Right lobe of liver (tissue), 6 donors: ENCODE measurements at regions of chr11 and their contacts with region 1.

Region 1: GRCh38 chr11:27183672-27184457 is 143.2 kb downstream of the BBOX1 start:
- DNase-seq: peak in 2 of 3 donors; percentile 35 to 66
- ATAC-seq: peak; percentile 87 to 88 (median 88)
- H3K4me3 ChIP-seq: peak overlapping the region in 2 of 3 donors; percentile 27
- H3K27ac ChIP-seq: peak overlapping the region in 2 of 3 donors; percentile 38 to 41
- H3K4me1 ChIP-seq: peaks cover 0 to 32% (median 0%) of the 10 kb centered on the region in 4 donors
- H3K27me3 ChIP-seq: no peaks in the 10 kb centered on the region
- CTCF ChIP-seq: peak; percentile 72 to 85 (median 79)
- POLR2A ChIP-seq: no peak

Region 2: DNA sequence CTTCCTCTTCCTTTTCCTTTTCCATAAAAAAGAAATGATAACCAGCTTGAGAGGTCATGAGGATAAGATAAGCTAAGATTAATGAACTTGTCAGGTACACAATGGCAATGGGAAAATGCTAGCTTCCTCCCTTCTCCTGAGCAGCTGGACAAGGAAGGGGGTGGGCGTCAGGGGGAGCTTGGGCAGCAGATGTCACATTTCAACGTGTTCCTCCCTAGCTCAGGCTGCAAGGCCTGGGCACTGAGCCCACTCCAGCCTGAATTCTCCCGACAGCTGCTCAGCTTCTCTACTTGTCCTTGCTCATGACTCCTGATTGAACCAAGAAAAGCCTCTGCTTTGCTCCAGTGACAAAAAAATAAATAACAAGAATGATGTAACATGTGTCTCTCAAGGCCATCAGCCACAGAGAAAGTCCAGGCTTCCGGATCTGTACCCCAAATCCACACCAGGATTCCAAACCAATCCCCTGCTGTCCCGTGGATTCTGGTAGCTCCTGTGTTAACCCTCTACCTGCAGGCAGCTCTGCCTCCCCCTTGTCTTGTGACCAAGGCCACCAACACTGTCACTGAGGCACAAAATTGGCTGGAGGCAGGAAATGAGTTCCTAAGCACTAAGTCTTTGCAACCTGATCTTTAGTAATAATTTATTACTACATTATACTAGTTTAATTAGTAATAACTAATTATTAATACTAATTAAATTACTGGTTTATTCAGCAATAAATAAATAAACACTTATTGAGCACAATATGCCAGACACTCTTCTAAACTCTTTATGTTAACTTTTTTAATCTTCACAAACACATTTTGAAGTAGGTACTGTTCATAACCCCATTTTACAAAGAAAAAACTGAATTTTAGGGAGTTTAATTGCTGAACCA is 32.6 kb after region 1 on chr11:
- intact Hi-C with region 1: no loop called
- DNase-seq: peak in 1 of 3 donors; percentile 42
- ATAC-seq: peak; percentile 44 to 63 (median 54)
- H3K4me3 ChIP-seq: no peak overlapping the region
- H3K27ac ChIP-seq: no peak overlapping the region
- H3K4me1 ChIP-seq: no peaks in the 10 kb centered on the region
- H3K27me3 ChIP-seq: no peaks in the 10 kb centered on the region
- CTCF ChIP-seq: no peak
- POLR2A ChIP-seq: no peak

Region 3: DNA sequence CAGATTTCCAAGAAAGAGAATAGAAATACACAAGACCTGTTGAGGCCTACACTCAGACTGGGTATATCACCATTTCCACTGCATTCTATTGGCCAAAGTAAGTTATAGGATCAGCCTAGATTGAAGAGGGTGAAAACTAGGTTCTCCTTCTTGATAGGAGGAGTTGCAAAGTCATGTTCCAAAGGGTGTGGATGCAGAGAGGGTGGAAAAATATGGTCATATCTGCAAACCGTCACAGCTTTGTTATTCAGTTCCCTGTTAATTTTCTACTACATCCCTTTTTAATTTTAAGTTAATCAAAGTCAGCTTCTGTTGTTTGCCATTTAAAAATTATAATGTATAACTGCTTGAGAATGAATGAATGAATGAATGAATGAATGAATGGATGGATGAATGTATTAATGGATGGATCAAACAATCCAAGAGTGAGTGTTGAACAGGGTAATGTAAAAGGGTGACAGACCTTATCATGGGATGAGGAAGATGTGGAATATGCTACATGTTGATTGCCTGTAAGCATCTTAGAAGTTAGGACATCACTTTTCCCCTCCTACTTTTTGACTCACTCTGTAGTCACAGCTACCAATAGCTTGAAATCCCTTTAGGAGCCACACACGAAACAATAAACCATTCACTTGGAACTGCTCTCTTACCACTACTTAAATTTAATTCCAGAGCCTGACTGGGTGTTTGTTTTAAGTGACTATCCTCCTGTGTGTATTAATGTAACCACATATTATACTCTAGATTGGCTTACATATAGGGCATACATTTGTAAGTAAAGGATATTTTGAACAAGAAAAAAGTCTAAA is 57.7 kb after region 1 on chr11:
- intact Hi-C with region 1: no loop called
- DNase-seq: no peak
- ATAC-seq: no peak
- H3K4me3 ChIP-seq: no peak overlapping the region
- H3K27ac ChIP-seq: no peak overlapping the region
- H3K4me1 ChIP-seq: no peaks in the 10 kb centered on the region
- H3K27me3 ChIP-seq: no peaks in the 10 kb centered on the region
- CTCF ChIP-seq: no peak
- POLR2A ChIP-seq: no peak

Region 4: GRCh38 chr11:27254729-27255446 is 71.0 kb after region 1 on chr11:
- intact Hi-C with region 1: no loop called
- DNase-seq: no peak
- ATAC-seq: no peak
- H3K4me3 ChIP-seq: no peak overlapping the region
- H3K27ac ChIP-seq: no peak overlapping the region
- H3K4me1 ChIP-seq: no peaks in the 10 kb centered on the region
- H3K27me3 ChIP-seq: no peaks in the 10 kb centered on the region
- CTCF ChIP-seq: no peak
- POLR2A ChIP-seq: no peak

Region 5: GRCh38 chr11:27485930-27486773 is 302.3 kb after region 1 on chr11:
- intact Hi-C with region 1: loop called in 1 of 2 experiments (anchors 10 kb)
- DNase-seq: no peak
- ATAC-seq: peak; percentile 71 to 82 (median 76)
- H3K4me3 ChIP-seq: no peak overlapping the region
- H3K27ac ChIP-seq: peak overlapping the region in 1 of 3 donors; percentile 25
- H3K4me1 ChIP-seq: peaks cover 0 to 9% (median 0%) of the 10 kb centered on the region in 4 donors
- H3K27me3 ChIP-seq: no peaks in the 10 kb centered on the region
- CTCF ChIP-seq: peak; percentile 84 to 95 (median 90)
- POLR2A ChIP-seq: no peak

Region 6: DNA sequence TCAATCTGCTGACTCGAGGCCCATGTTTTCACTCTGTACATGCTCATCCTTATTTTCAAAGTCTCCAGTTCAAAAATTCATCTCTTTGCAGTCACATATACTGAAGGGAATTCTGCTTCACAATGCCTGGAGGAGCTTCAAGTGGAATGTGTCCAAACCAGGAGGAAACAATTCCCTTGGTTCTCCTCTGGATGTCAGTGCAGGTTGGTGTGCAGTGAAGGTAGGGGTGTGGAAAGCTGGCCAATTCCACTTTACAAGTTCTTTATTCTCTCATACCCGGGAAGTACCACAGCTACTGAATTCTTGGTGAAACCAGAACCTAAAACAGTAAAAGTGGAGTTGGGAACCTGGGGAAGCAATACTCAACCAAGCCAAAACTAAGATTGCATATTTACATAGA is 459.1 kb after region 1 on chr11:
- intact Hi-C with region 1: no loop called
- DNase-seq: no peak
- ATAC-seq: no peak
- H3K4me3 ChIP-seq: no peak overlapping the region
- H3K27ac ChIP-seq: no peak overlapping the region
- H3K4me1 ChIP-seq: no peaks in the 10 kb centered on the region
- H3K27me3 ChIP-seq: no peaks in the 10 kb centered on the region
- CTCF ChIP-seq: no peak
- POLR2A ChIP-seq: no peak